Activated CD4-positive, alpha-beta memory T cell treated with anti-CD3 and anti-CD28 coated beads, Interleukin-2, amount 10 ng/mL, durations not matched to agents 7 days and 5 days (primary cell): ENCODE measurements at regions of chr6 and their contacts with region 1.

Region 1: DNA sequence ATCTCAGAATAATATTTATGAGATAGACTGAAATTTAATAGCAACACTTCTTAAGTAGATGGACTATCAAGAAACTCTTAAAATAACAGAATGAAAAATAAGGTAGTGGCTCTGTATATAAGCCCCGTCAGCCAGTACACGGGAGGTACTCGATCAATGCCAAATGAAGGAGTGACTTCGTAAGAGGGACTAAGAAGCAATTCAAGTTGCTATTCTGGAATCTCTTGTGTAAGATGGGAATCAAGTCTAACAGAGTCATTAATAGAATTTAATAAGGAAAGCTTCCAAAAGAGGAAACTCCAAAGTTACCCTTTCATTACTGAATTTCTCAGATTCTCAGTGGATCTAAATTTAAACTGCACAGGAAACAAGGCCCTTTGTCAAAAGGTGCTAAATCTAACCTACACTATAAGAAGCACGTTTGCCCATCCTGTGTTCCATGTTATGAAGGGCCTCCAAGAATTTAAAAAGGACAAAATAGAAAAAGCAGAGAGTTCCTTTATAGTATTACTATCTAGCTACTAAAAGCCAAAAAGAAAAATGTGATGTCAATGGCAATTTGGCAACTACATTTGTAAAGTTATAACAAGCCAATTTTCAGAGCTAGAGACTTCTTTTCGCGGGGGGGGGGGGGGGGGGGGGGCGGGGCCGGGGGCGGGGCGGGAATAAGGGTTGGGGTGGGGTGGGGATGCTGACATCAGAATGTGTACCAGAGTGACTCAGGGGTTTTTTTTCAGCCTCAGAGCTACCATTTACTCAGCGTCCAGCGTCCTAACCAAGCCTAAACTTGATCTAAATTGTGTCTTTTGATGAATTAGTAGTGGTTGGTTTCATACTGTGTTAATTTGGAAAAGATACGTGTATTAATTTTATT is 200.6 kb downstream of the GMPR start:
- DNase-seq: peak; percentile 43
- H3K4me3 Mint-ChIP-seq: peak overlapping the region; percentile 90
- H3K27ac Mint-ChIP-seq: peak overlapping the region; percentile 94
- H3K4me1 Mint-ChIP-seq: peaks cover 73% of the 10 kb centered on the region
- H3K27me3 Mint-ChIP-seq: no peaks in the 10 kb centered on the region

Region 2: DNA sequence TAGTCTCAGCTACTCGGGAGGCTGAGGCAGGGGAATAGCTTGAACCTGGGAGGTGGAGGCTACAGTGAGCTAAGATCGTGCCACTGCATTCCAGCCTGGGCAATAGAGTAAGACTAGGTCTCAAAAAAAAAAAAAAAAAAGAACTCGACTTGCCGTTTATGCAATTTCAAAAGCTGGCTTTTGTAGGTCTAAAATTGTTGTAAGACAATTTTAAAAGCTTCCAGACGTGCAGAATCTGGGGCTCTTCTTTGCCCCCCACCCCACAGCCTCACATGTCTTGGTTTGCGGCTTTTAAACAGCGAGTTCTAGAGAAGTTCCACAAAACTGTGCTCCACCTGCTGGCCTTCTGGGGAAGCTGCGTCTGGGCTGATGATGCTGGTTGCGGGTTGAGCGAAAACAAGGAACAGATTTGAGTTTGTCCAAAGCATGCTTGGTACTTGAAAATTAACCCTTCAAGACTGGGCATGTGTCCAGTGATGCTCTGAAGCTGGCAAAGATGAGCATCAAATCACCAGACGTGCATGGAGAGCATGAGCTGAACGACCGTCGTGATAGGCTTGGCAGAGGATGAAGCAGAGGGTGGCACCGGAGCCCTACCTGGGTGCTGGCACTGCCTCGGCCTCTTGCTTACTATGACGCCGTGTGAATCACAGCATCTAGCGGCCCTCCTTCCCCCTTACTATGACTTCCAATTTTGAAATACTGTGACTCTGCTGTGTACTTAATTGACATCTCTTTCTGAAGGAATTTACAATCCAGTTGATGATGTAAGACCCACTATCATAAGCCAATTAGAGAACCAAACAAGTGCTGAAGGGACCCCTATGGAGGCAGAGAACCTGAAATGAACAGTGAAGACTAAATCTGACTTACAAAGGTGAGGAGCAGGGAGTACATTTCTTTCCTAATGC is 29.2 kb before region 1 on chr6:
- CTCF ChIA-PET with region 1: interaction called, 10 read pairs
- POLR2A ChIA-PET with region 1: interaction called, 96 read pairs
- DNase-seq: peak; percentile 73
- H3K4me3 Mint-ChIP-seq: peak overlapping the region; percentile 63
- H3K27ac Mint-ChIP-seq: peak overlapping the region; percentile 73
- H3K4me1 Mint-ChIP-seq: peaks cover 65% of the 10 kb centered on the region
- H3K27me3 Mint-ChIP-seq: no peaks in the 10 kb centered on the region

Region 3: DNA sequence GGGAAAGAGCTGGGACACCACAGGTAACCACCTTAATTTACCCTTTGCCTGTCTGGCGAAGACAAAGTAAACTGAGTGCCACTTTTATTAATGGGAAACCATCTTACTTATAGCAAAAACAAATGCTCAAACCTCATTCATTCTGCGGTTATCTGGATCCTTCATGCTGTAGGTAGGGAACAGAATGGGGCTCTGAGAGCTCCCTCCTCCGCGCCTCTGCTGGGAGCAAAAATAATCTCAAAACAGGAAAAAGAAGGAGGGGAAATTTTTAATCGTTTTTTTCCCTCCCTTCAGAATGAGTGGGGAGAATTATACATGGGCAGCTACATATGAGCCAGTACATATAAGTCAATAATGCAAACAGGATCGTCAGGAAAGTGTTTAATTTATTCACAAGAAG is 23.3 kb before region 1 on chr6:
- CTCF ChIA-PET with region 1: interaction called, 12 read pairs
- POLR2A ChIA-PET with region 1: interaction called, 109 read pairs
- DNase-seq: no peak
- H3K4me3 Mint-ChIP-seq: no peak overlapping the region
- H3K27ac Mint-ChIP-seq: peak overlapping the region; percentile 8
- H3K4me1 Mint-ChIP-seq: peaks cover 60% of the 10 kb centered on the region
- H3K27me3 Mint-ChIP-seq: no peaks in the 10 kb centered on the region

Region 4: GRCh38 chr6:16420715-16421461 is 18.1 kb before region 1 on chr6:
- CTCF ChIA-PET with region 1: interaction called, 12 read pairs
- POLR2A ChIA-PET with region 1: interaction called, 109 read pairs
- DNase-seq: peak; percentile 49
- H3K4me3 Mint-ChIP-seq: peak overlapping the region; percentile 29
- H3K27ac Mint-ChIP-seq: peak overlapping the region; percentile 99
- H3K4me1 Mint-ChIP-seq: peaks cover 55% of the 10 kb centered on the region
- H3K27me3 Mint-ChIP-seq: no peaks in the 10 kb centered on the region

Region 5: GRCh38 chr6:16425881-16426615 is 12.9 kb before region 1 on chr6:
- CTCF ChIA-PET with region 1: interaction called, 12 read pairs
- POLR2A ChIA-PET with region 1: interaction called, 109 read pairs
- DNase-seq: no peak
- H3K4me3 Mint-ChIP-seq: no peak overlapping the region
- H3K27ac Mint-ChIP-seq: no peak overlapping the region
- H3K4me1 Mint-ChIP-seq: peaks cover 41% of the 10 kb centered on the region
- H3K27me3 Mint-ChIP-seq: no peaks in the 10 kb centered on the region

Region 6: GRCh38 chr6:16450285-16450684 is 11.3 kb after region 1 on chr6:
- CTCF ChIA-PET with region 1: interaction called, 3 read pairs
- POLR2A ChIA-PET with region 1: interaction called, 10 read pairs
- DNase-seq: no peak
- H3K4me3 Mint-ChIP-seq: no peak overlapping the region
- H3K27ac Mint-ChIP-seq: no peak overlapping the region
- H3K4me1 Mint-ChIP-seq: peaks cover 28% of the 10 kb centered on the region
- H3K27me3 Mint-ChIP-seq: no peaks in the 10 kb centered on the region

Region 7: DNA sequence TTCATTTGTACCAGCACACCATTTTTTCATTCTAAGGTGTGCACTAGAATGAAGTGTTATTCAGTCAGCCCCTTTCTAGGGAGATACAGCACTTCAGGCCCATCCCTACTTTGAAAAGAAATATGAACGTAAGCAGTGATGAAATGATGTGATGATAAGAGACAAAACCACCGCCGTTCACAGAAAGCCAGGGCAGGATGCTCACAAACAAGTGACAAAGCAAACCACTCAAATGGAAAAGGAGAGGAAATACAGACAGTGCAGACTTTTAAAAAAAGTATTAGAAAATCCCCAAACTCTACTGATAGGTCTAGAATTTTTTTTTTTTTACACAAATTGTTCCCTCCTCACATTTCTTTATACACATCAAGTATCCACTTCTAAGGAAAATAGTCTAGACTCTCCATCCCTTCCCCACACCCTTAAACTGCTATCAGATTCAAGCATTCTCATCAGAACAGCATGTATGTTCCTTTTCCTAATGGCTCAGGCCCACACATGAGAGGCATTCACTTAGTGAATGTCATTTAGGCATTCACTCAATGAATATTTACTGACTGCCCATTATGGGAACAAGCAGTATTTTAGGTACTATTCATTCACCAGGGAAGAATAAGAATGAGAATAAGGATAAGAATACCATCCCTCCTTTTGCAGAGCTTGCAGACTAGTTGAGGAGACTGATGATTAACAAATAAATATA is 42.9 kb after region 1 on chr6:
- CTCF ChIA-PET with region 1: interaction called, 5 read pairs
- POLR2A ChIA-PET with region 1: interaction called, 106 read pairs
- DNase-seq: peak; percentile 80
- H3K4me3 Mint-ChIP-seq: peak overlapping the region; percentile 46
- H3K27ac Mint-ChIP-seq: peak overlapping the region; percentile 94
- H3K4me1 Mint-ChIP-seq: peaks cover 94% of the 10 kb centered on the region
- H3K27me3 Mint-ChIP-seq: no peaks in the 10 kb centered on the region

Region 8: DNA sequence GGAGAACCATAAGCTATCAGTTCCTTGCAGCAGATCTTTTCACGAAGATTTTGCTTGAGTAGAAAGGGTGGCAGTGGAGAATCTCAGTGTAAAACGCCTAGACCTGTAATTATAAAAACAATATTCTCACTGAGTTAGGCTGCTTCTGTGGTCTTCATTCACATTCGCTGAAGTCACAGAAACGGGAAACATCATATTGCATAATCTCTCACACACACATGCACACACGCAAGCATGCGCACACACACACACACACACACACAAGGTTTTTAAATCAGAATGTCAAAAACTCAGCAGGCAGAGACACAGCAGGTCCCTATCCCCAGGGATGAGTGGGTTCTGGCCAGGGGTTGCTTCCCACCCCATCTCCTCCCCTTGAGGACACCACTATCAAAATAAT is 146.8 kb after region 1 on chr6:
- CTCF ChIA-PET with region 1: no interaction called
- POLR2A ChIA-PET with region 1: no interaction called
- DNase-seq: no peak
- H3K4me3 Mint-ChIP-seq: no peak overlapping the region
- H3K27ac Mint-ChIP-seq: no peak overlapping the region
- H3K4me1 Mint-ChIP-seq: peaks cover 15% of the 10 kb centered on the region
- H3K27me3 Mint-ChIP-seq: no peaks in the 10 kb centered on the region